Left cardiac atrium (tissue), 4 donors: ENCODE measurements at regions of chr6 and their contacts with region 1.

Region 1: DNA sequence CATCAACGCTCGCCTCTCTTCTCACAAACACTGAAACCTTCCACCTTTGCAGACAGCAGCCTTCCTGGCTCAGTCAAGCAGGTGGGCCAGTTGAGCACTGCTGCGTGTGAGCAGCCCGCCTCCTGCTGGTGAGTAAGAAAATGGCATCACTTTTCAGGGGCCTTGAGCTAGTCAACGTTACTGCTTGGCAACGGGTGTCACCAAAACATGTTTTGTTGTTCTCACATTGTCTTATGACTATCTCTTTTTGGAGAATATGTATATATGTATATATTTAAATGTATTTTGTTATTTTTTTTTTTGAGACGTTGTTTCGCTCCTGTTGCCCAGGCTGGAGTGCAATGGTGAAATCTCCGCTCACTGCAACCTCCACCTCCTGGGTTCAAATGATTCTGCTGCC is 97.0 kb upstream of the AGPAT4 start:
- DNase-seq: peak; percentile 54
- ATAC-seq: peak; percentile 53 to 68

Region 2: DNA sequence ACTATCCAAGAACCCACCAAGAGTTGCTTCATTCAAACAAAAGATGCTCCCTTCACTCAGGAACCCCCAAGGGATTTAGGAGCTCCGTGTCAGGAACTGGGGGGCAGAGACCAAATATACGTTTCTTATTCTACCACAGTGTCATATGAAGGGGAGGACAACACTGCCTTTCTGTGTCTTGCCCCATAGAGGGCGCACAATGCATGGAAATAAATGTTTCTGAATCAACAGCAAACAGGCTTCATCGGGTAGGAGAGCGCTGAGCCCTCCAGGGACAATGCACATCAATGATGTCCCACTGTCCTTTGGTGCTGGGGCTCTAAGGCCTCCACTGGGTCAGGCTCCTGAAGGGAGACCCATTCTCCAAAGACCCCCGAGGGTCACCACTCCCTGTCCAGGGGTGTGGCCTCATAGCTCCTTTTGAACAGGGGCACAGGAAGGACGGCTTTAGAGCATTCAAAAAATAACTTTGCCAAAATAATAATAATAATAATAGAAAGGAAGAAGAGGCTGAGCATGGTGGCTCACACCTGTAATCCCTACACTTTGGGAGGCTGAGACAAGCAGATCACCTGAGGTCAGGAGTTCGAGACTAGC is 637.7 kb before region 1 on chr6:
- intact Hi-C with region 1: loop called in 1 of 2 experiments (anchors 5 kb)
- DNase-seq: peak; percentile 30
- ATAC-seq: peak; percentile 58 to 65

Region 3: GRCh38 chr6:160919723-160920440 is 451.0 kb before region 1 on chr6:
- intact Hi-C with region 1: loop called in 1 of 2 experiments (anchors 10 kb)
- DNase-seq: no peak
- ATAC-seq: peak in 1 of 2 donors; percentile 44

Region 4: DNA sequence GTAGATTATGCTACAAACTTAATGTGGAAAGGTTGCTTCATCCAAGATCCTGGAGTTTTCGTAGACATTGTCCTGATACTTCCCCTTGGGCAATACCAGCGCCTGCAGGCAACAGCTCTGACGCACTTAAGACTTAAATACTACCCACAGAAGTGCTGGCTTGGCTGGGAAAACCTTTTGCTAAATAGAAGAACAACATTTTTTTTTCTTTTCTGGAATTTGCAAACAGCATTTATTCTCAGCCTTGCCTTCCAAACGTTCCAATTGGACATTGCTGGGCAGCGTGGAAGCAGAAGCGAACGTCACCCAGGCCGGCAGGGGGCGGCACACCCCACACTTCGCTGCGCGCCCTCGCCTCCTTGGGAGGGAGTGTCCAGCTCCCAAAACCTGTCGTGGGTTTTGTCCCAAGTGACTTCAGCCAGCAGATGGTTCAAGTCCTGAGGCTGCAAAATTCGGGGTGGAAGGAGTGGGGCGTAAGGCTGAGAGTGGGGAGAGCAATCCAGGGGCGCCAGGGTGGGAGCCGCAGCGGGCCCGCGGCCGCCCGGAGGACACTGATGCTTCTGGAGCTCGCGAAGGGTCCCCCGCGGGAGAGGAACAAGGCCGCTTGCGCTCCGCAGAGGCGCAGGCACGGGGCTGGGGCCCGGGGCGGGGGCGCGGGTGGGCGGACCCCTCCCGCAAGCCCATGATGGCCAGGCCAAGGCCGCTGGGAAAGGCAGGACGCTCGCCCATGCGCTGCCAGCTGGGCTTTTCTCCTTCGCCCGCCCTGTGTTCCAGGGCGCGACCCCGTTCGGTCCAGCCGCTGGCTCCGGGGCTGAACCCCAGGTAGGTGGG is 440.1 kb before region 1 on chr6:
- intact Hi-C with region 1: loop called (anchors 5 to 10 kb)
- DNase-seq: peak; percentile 79
- ATAC-seq: peak; percentile 96

Region 5: DNA sequence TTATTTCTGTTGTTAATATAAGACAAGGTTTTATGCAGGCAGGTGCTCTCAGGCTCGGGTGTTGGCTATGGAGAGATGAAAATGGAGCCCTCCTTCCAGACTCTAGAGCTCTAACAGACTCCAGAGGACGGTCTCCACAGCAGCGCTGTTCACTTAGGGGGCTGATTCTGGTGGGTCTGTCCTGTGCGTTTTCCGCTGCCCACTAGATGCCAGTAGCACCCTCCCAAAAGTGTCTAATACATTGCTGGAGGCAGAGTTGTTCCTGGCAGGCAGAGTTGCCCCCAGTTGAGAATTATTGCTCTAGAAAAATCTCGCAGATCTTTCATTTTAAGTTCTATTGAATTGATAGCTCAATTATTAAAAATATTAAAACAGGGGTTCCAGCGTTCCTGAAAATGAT is 269.4 kb before region 1 on chr6:
- intact Hi-C with region 1: loop called in 1 of 2 experiments (anchors 5 kb)
- DNase-seq: no peak
- ATAC-seq: no peak

Region 6: DNA sequence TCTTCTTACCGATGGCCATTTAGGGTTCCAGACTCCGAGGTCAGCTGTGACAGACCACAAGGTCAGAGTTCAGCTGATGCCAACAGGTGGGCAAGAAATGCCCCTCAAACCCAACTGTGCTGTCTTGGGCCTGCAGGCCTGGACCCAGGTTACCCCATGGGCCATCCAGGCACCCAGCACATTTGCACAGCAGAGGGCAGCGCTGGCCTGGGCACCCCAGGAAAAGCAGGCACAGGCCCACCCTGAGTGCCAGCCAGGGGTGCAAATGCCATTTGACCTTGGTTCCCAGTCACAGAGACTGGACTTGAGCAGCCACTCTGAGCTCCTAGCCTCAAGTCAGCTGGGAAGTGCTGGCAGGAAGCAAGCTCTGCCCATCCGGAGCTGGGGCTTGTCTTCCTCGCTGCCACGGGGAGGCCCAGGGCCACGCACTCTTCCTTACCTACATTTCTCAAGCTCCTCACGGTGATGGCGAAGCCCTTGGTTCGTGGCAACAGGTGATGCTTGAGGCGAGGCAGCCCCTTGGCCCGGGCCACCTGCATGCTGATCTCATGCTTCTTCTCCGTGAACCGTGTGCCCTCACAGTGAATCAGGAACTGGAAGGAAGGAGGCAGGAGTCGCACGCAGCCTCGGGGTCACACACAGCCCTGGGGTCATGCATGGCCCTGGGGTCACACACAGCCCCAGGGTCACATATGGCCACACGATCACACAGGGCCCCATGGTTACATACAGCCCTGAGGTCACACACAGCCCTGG is 217.8 kb before region 1 on chr6:
- intact Hi-C with region 1: loop called (anchors 10 kb)
- DNase-seq: no peak
- ATAC-seq: peak in 1 of 2 donors; percentile 39

Region 7: GRCh38 chr6:161792851-161793493 is 422.1 kb after region 1 on chr6:
- intact Hi-C with region 1: no loop called
- DNase-seq: no peak
- ATAC-seq: no peak